B cell (primary cell): ENCODE measurements at regions of chr9 and their contacts with region 1.

Region 1: GRCh38 chr9:99184475-99185347 is 37.0 kb downstream of the ALG2 start:
- DNase-seq: peak; percentile 89
- ATAC-seq: peak; percentile 86
- H3K4me3 ChIP-seq: peak overlapping the region in 3 of 5 experiments; percentile 6 to 36 (median 29)
- H3K4me3 Mint-ChIP-seq: peak overlapping the region; percentile 62
- H3K27ac ChIP-seq: peak overlapping the region in 1 of 2 donors; percentile 3
- H3K27ac Mint-ChIP-seq: peak overlapping the region; percentile 84
- H3K4me1 ChIP-seq: peaks cover 49 to 65% of the 10 kb centered on the region in 2 donors
- H3K4me1 Mint-ChIP-seq: peaks cover 92% of the 10 kb centered on the region
- H3K27me3 ChIP-seq: no peaks in the 10 kb centered on the region
- H3K27me3 Mint-ChIP-seq: no peaks in the 10 kb centered on the region
- CTCF ChIP-seq: peak; percentile 99

Region 2: DNA sequence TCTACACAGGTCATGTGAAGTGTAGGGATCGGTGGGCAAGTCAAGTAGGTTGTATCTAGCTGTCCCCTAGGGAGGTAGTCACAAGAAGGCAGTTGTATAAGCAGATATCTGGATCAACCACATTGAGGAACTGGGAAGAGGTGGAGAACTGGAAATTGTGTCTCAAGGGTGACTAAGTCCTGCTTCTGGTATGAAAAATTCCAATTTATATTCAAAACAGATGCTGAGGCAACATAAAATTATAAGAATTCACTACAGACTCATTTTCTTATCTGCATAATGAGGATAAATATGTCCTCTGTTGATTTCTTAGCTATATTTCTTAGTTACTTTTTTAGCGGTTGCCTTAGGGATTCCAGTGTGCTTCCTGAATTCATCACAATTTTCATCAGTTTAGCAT is 330.4 kb before region 1 on chr9:
- CTCF ChIA-PET with region 1: no interaction called
- POLR2A ChIA-PET with region 1: no interaction called
- intact Hi-C with region 1: no loop called
- DNase-seq: no peak
- ATAC-seq: no peak
- H3K4me3 ChIP-seq: no peak overlapping the region
- H3K4me3 Mint-ChIP-seq: no peak overlapping the region
- H3K27ac ChIP-seq: no peak overlapping the region
- H3K27ac Mint-ChIP-seq: no peak overlapping the region
- H3K4me1 ChIP-seq: no peaks in the 10 kb centered on the region
- H3K4me1 Mint-ChIP-seq: no peaks in the 10 kb centered on the region
- H3K27me3 ChIP-seq: no peaks in the 10 kb centered on the region
- H3K27me3 Mint-ChIP-seq: peaks cover 11% of the 10 kb centered on the region
- CTCF ChIP-seq: no peak

Region 3: DNA sequence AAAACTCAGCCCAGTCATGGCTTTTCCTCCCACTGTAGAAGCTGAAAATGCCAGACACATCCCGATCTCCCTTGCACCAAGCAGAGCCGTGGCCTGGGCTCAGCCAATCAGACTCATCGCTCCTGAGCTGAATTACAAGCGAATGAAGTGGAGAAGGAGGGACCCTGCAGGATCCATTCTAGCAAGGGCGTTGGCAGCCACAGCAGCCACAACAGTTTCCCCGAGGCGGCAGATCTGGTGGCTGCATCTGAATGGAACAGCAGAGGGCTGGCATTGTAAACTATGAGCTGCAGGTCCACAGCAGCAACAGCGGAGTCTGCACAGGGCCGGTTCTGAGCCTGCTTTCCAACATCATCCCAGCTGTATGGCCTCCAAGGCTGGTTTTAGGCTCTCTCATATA is 13.3 kb after region 1 on chr9:
- CTCF ChIA-PET with region 1: interaction called, 24 read pairs
- POLR2A ChIA-PET with region 1: no interaction called
- intact Hi-C with region 1: no loop called
- DNase-seq: no peak
- ATAC-seq: no peak
- H3K4me3 ChIP-seq: no peak overlapping the region
- H3K4me3 Mint-ChIP-seq: no peak overlapping the region
- H3K27ac ChIP-seq: no peak overlapping the region
- H3K27ac Mint-ChIP-seq: no peak overlapping the region
- H3K4me1 ChIP-seq: no peaks in the 10 kb centered on the region
- H3K4me1 Mint-ChIP-seq: peaks cover 8% of the 10 kb centered on the region
- H3K27me3 ChIP-seq: no peaks in the 10 kb centered on the region
- H3K27me3 Mint-ChIP-seq: no peaks in the 10 kb centered on the region
- CTCF ChIP-seq: no peak

Region 4: GRCh38 chr9:99231711-99232110 is 47.0 kb after region 1 on chr9:
- CTCF ChIA-PET with region 1: interaction called, 73 read pairs
- POLR2A ChIA-PET with region 1: interaction called, 3 read pairs
- intact Hi-C with region 1: loop called (anchors 2 kb)
- DNase-seq: peak; percentile 52
- ATAC-seq: no peak
- H3K4me3 ChIP-seq: no peak overlapping the region
- H3K4me3 Mint-ChIP-seq: no peak overlapping the region
- H3K27ac ChIP-seq: no peak overlapping the region
- H3K27ac Mint-ChIP-seq: no peak overlapping the region
- H3K4me1 ChIP-seq: peaks cover 21 to 23% of the 10 kb centered on the region in 2 donors
- H3K4me1 Mint-ChIP-seq: peaks cover 29% of the 10 kb centered on the region
- H3K27me3 ChIP-seq: no peaks in the 10 kb centered on the region
- H3K27me3 Mint-ChIP-seq: no peaks in the 10 kb centered on the region
- CTCF ChIP-seq: peak; percentile 75

Region 5: GRCh38 chr9:99319048-99319447 is 134.3 kb after region 1 on chr9:
- CTCF ChIA-PET with region 1: no interaction called
- POLR2A ChIA-PET with region 1: no interaction called
- intact Hi-C with region 1: no loop called
- DNase-seq: no peak
- ATAC-seq: no peak
- H3K4me3 ChIP-seq: no peak overlapping the region
- H3K4me3 Mint-ChIP-seq: no peak overlapping the region
- H3K27ac ChIP-seq: no peak overlapping the region
- H3K27ac Mint-ChIP-seq: no peak overlapping the region
- H3K4me1 ChIP-seq: no peaks in the 10 kb centered on the region
- H3K4me1 Mint-ChIP-seq: no peaks in the 10 kb centered on the region
- H3K27me3 ChIP-seq: peaks cover 0 to 16% (median 5%) of the 10 kb centered on the region in 4 experiments
- H3K27me3 Mint-ChIP-seq: peaks cover 41% of the 10 kb centered on the region
- CTCF ChIP-seq: no peak

Region 6: DNA sequence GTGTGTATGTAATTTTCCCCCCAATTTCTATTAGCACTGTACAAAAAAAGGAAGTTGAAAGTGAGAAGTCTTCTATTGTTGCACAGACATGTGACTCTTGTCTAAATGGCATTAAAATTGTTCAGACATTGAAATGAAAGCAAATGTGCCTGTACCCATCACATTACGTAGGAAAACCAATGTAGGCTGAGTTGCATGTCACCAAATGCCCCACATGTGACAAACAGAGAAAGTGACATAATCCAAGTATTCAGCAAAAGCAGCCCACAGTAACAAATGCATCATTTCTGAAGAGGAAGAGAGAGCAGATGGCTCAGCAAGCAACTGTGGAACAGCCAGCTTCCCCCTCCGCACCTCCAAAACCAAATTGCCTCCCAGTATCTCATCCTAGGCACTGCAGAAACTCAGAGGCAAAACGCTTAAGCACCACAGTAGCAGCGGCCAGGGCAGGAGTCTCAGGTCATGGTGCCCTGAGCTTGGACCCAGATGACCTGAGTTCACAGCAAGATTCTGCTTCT is 475.5 kb after region 1 on chr9:
- CTCF ChIA-PET with region 1: interaction called, 3 read pairs
- POLR2A ChIA-PET with region 1: no interaction called
- intact Hi-C with region 1: loop called (anchors 1 kb)
- DNase-seq: peak; percentile 90
- ATAC-seq: peak; percentile 93
- H3K4me3 ChIP-seq: peak overlapping the region in 3 of 5 experiments; percentile 12 to 40 (median 22)
- H3K4me3 Mint-ChIP-seq: peak overlapping the region; percentile 55
- H3K27ac ChIP-seq: peak overlapping the region; percentile 59 to 80
- H3K27ac Mint-ChIP-seq: peak overlapping the region; percentile 92
- H3K4me1 ChIP-seq: peaks cover 14 to 16% of the 10 kb centered on the region in 2 donors
- H3K4me1 Mint-ChIP-seq: peaks cover 22% of the 10 kb centered on the region
- H3K27me3 ChIP-seq: no peaks in the 10 kb centered on the region
- H3K27me3 Mint-ChIP-seq: no peaks in the 10 kb centered on the region
- CTCF ChIP-seq: no peak

Region 7: GRCh38 chr9:99906403-99907207 is 721.9 kb after region 1 on chr9 and contains the start of gene STX17:
- CTCF ChIA-PET with region 1: interaction called, 3 read pairs
- POLR2A ChIA-PET with region 1: no interaction called
- intact Hi-C with region 1: loop called (anchors 2 kb)
- DNase-seq: peak; percentile 93
- ATAC-seq: peak; percentile 88
- H3K4me3 ChIP-seq: peak within 1 kb of the TSS; percentile 75 to 98 (median 97)
- H3K4me3 Mint-ChIP-seq: peak within 1 kb of the TSS; percentile 99
- H3K27ac ChIP-seq: peak within 1 kb of the TSS; percentile 91 to 96
- H3K27ac Mint-ChIP-seq: peak within 1 kb of the TSS; percentile 98
- H3K4me1 ChIP-seq: peaks cover 4 to 14% of the 10 kb centered on the region in 2 donors
- H3K4me1 Mint-ChIP-seq: peaks cover 17% of the 10 kb centered on the region
- H3K27me3 ChIP-seq: peaks cover 0 to 3% (median 0%) of the 10 kb centered on the region in 4 experiments
- H3K27me3 Mint-ChIP-seq: no peaks in the 10 kb centered on the region
- CTCF ChIP-seq: no peak
- total RNA-seq, gene STX17: 40.2 and 42.9 TPM in 2 replicates

Region 8: GRCh38 chr9:100216178-100216787 is 1031.6 kb after region 1 on chr9:
- CTCF ChIA-PET with region 1: interaction called, 14 read pairs
- POLR2A ChIA-PET with region 1: no interaction called
- intact Hi-C with region 1: no loop called
- DNase-seq: peak; percentile 81
- ATAC-seq: peak; percentile 85
- H3K4me3 ChIP-seq: no peak overlapping the region
- H3K4me3 Mint-ChIP-seq: no peak overlapping the region
- H3K27ac ChIP-seq: no peak overlapping the region
- H3K27ac Mint-ChIP-seq: no peak overlapping the region
- H3K4me1 ChIP-seq: no peaks in the 10 kb centered on the region
- H3K4me1 Mint-ChIP-seq: no peaks in the 10 kb centered on the region
- H3K27me3 ChIP-seq: no peaks in the 10 kb centered on the region
- H3K27me3 Mint-ChIP-seq: no peaks in the 10 kb centered on the region
- CTCF ChIP-seq: peak; percentile 79